Posterior vena cava (tissue), 2 donors: ENCODE measurements at regions of chr5 and their contacts with region 1.

Region 1: DNA sequence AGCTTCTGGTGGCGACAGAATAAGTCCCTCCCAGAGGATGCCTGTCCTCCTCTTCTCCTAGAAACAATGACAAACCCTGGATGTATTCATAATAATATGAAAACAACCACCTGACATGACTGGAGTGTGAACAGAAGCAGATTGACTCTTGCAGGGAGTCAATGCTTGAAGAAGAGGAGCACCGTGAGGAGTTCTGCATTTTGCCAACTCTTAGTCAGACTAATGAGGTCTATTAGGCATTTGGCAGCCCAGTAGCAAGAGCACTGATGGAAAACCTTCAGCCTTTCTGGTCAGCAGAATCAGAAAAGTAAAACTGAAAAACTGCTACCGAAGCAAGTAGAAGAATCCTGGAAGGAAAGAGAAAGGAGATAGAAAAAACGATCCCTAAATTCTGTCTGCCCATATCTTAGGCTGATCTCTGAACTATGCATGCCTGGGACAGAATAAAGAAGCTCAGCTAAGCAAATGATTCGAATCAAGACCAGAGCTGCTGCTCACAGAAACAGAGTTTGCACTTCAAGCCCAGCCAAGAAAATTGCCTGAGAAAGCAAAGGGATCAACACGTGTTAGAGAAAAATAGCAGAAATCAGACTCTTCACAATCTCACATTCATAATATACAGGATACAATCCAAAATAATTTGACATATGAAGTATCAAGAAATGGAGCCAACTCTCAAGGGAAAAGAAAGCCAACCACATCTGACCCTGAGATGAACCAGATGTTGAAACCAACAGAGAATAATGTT is 69.5 kb upstream of the OSMR start:
- DNase-seq: no peak

Region 2: GRCh38 chr5:38556599-38557305 is 219.6 kb before region 1 on chr5 and contains the start of gene LIFR:
- intact Hi-C with region 1: loop called in 1 of 2 experiments (anchors 10 kb)
- DNase-seq: peak; percentile 93
- total RNA-seq, gene LIFR: 75.0 to 80.4 TPM

Region 3: DNA sequence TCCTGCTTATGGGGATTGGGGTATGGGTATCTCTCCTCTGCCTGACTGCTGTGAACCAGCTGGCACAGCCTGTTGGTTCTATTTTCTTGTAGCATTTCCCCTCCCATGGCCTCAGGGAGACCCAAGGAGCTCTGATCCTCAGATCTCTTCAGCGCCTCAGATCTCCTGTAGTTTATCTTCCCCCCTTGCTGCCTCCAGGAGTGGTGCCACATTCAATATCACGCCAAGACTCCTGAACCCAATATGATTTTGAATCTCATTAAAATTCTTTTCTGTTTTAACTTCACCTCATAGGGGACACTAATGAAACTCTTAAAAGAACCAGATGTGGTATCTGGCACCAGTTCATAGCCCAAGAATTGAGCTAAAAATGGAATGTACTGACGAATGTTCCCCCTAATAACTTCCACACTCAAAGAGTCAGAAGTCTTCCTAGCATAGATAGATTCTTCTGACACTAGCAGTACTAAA is 160.3 kb before region 1 on chr5:
- intact Hi-C with region 1: no loop called
- DNase-seq: no peak

Region 4: DNA sequence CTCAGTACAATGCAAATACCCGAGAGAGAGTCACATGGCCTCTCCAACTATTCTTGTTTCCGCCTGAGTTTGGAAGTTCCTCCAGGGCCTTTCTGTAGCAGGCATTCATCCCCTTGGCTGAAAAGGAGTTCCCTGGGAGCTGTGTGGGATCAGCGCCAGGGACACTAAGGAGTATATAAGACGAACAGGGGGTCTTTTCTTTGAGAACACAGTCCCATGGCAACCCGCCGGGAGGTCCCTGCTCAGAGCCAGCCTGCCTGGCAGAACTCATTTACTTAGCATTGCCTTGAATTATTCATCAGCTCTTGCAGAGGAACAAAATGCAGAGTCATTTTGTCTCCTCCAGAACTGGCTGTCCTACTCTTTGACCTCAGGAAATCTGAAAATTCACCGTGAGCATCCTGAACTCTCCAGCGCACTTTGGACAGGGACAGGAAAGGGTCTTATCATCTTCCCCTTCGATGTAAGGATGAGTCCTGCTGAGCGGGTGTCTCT is 50.9 kb before region 1 on chr5:
- intact Hi-C with region 1: no loop called
- DNase-seq: no peak

Region 5: DNA sequence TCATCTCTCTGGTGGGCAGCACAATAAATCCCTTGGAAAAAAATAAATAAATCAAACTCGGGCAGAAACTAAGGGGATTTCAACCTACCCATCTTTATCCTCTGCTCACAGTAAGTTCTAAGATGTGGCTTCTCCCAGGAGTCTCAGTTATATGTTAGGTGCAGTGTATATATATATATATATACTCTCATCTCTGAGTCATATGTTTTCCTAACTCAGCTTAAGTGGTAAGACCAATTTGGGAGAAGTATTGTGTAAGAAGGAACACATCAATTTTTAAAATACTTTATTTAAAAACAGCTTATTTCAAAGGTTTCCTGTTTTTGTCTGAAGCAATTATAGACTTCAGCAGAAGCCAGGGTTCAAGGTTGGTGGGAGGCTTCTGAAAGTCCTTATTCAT is 49.2 kb after region 1 on chr5:
- intact Hi-C with region 1: no loop called
- DNase-seq: no peak